ENCODE measurements at regions of chr1 and their contacts with region 1.

Region 1: DNA sequence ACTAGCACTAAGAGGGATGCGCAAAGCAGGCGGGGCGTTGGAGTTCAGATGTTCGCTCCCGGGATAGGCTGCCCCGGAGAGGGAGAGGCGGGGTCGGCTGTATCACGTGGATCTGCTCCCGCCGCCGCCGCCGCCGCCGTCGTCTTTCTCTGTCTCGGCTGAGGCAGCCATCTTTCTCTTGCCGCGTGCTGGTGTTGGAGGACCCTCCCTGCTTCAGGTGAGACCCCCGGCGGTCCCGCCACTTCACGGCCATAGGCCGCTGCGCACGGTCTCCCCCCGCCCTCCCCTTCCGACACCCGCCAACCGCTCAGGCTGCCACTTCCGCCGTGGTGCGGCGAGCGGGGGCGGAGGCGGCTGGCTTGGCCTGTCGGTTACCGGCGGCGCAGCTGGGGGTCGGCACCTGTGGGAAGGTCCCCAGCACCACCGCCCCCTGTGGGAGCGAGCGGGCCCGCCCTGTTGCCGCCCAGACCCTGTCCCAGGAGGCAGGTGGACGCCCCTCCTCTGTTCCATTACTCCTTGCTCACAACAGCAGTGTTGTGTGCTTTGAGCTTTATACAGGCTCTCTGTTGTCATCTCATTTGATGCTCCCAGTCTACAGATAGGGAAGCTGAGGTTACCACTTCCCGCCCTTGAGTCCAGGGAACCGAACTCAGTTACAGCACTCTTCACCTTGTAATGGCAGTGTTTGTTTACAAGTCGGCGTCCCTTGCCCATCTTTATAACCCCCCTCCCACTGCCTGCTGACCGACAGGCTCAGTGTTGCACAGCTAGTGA is at the start of gene BTF3L4:
- DNase-seq: peak; percentile 94 to 98 (median 98)
- H3K4me3 ChIP-seq: peak within 1 kb of the TSS; percentile 69 to 100 (median 96)
- H3K27ac ChIP-seq: peak within 1 kb of the TSS; percentile 58 to 97 (median 91)
- H3K27me3 ChIP-seq: no peaks in the 10 kb centered on the region
- CTCF ChIP-seq: peak in 25 of 56 donors; percentile 12 to 48 (median 22)
- total RNA-seq, gene BTF3L4: 27.7 to 67.7 (median 49.5) TPM

Region 2: DNA sequence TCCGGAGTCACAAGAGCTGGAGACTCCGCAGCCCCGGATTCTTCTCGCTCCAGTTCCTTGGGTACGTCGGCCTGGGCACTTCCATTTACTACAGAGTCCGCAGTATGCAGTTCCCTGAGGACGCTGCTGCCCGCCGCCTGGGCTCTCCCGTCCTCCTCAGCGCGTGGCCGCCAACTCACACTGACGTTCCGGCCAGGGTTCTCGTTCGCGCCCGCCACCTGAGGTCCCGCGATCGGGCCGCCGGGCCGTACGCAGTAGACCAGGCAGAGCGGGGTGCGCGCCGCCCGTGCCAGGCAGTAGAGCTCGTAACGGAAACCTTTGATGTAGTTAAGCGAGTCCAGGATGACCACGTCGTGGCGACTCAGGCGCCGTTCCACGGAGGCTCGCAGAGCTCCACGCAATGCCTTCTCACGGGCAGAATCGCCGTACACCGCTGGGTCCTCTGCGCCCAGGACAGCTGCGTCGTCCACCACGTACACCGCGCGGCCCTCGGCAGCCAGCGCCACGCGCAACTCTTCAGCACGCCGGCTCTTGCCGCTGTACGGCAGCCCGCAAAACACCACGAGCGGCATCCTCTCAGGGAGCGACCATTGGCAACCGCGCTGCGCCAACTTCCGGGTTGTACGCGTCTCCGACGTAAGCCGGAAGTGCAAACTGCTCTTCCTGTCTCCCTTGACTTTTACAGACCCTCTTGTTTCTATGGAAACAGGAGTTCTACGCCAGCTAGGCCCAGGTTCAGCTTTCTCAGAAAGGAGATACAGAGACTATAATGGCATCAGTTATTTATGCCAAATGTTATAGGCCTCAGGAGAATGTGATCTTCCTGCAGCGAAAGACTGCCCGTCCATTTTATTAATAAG is 22.9 kb before region 1 on chr1 and contains the start of gene KTI12:
- intact Hi-C with region 1: loop called (anchors 2 kb)
- DNase-seq: peak; percentile 68 to 91 (median 88)
- H3K4me3 ChIP-seq: peak within 1 kb of the TSS; percentile 50 to 96 (median 84)
- H3K27ac ChIP-seq: peak within 1 kb of the TSS; percentile 48 to 95 (median 84)
- H3K27me3 ChIP-seq: no peaks in the 10 kb centered on the region
- CTCF ChIP-seq: peak in 14 of 56 donors; percentile 2 to 32 (median 19)
- total RNA-seq, gene KTI12: 3.7 to 10.5 (median 6.4) TPM

Region 3: DNA sequence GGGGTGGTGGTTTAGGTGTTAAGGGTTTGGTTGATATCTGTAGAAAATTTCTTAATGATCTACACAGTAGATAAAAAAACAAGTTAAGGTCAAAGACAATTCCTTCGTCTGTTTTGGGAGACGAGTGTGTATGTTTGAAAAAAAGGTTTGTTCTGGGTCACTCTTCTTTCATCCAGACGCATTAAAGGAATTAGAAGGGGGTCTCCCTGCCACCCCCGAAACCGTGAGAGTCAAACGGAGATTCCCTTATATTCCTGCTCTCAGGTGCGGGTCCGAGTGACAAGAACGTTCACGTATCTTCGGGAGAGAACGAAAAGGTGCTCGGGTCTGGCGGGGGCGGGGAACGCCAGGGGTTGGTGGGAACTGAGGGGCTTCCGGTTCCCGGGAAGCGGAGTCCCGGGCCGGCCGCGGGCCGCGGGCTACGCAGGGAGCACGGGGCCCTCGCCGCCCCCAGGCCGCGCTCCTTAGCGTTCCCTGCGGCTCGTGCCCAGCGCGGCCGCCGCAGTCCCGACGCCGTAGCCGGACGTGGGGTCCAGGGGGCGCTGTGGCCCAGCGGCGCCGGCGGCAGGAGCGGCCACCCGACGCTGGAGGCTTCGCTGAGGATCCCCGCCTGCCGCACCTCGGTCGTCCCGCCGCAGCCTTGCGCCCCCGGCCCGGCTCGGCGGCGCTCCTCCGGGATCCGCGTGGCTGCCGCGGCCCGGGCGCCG is 85.3 kb after region 1 on chr1 and contains the start of gene ZFYVE9:
- intact Hi-C with region 1: loop called in 1 of 2 experiments (anchors 2 kb)
- DNase-seq: peak; percentile 32 to 84 (median 61)
- H3K4me3 ChIP-seq: peak within 1 kb of the TSS; percentile 57 to 97 (median 85)
- H3K27ac ChIP-seq: peak within 1 kb of the TSS; percentile 55 to 98 (median 93)
- H3K27me3 ChIP-seq: no peaks in the 10 kb centered on the region
- CTCF ChIP-seq: peak in 55 of 56 donors; percentile 13 to 91 (median 62)
- total RNA-seq, gene ZFYVE9: 28.8 to 91.5 (median 70.2) TPM

Region 4: GRCh38 chr1:52348704-52349300 is 292.5 kb after region 1 on chr1:
- intact Hi-C with region 1: loop called in 1 of 2 experiments (anchors 1 kb)
- DNase-seq: peak in 7 of 10 donors; percentile 38 to 76 (median 66)
- H3K4me3 ChIP-seq: no peak overlapping the region
- H3K27ac ChIP-seq: peak overlapping the region in 47 of 59 donors; percentile 0 to 74 (median 40)
- H3K27me3 ChIP-seq: no peaks in the 10 kb centered on the region
- CTCF ChIP-seq: peak in 48 of 56 donors; percentile 11 to 65 (median 42)

Region 5: GRCh38 chr1:52404116-52404986 is 348.0 kb after region 1 on chr1 and contains the starts of genes ORC1 and PRPF38A:
- intact Hi-C with region 1: loop called (anchors 5 to 10 kb)
- DNase-seq: peak; percentile 96 to 99 (median 98)
- H3K4me3 ChIP-seq: peak within 1 kb of the TSS; percentile 31 to 99 (median 90)
- H3K27ac ChIP-seq: peak within 1 kb of the TSS in 57 of 59 donors; percentile 20 to 96 (median 85)
- H3K27me3 ChIP-seq: no peaks in the 10 kb centered on the region
- CTCF ChIP-seq: peak in 44 of 56 donors; percentile 8 to 56 (median 38)
- total RNA-seq, gene ORC1: 0.17 to 1.3 (median 0.44) TPM in 115 of 120 experiments, not detected in the others
- total RNA-seq, gene PRPF38A: 30.5 to 72.7 (median 39.3) TPM

Region 6: GRCh38 chr1:52702886-52703787 is 646.8 kb after region 1 on chr1:
- intact Hi-C with region 1: loop called in 1 of 2 experiments (anchors 10 kb)
- DNase-seq: peak; percentile 80 to 98 (median 95)
- H3K4me3 ChIP-seq: peak overlapping the region; percentile 52 to 90 (median 71)
- H3K27ac ChIP-seq: peak overlapping the region; percentile 22 to 97 (median 90)
- H3K27me3 ChIP-seq: no peaks in the 10 kb centered on the region
- CTCF ChIP-seq: peak in 7 of 56 donors; percentile 5 to 29 (median 13)

Measured in dorsolateral prefrontal cortex (tissue), 120 donors.